Activated T-helper 1 cell treated with anti-CD3 and anti-CD28 coated beads, Interleukin-12 subunit alpha, Interleukin-12 subunit beta, Interleukin-2, Interleukin-4 antibody, amounts not matched to agents 30 ng/mL and 10 ng/mL and 1 ng/mL, durations not matched to agents 14 hours and 24 hours and 36 hours (primary cell): ENCODE measurements at regions of chr17 and their contacts with region 1.

Region 1: GRCh38 chr17:73645050-73645978 is 1.1 kb upstream of the SDK2 start:
- DNase-seq: no peak
- H3K4me3 Mint-ChIP-seq: peak overlapping the region; percentile 57
- H3K27ac Mint-ChIP-seq: no peak overlapping the region
- H3K4me1 Mint-ChIP-seq: peaks cover 9% of the 10 kb centered on the region
- H3K27me3 Mint-ChIP-seq: peaks cover 55% of the 10 kb centered on the region

Region 2: GRCh38 chr17:73429440-73430164 is 215.7 kb before region 1 on chr17:
- intact Hi-C with region 1: loop called (anchors 2 kb)
- DNase-seq: peak; percentile 69
- H3K4me3 Mint-ChIP-seq: no peak overlapping the region
- H3K27ac Mint-ChIP-seq: no peak overlapping the region
- H3K4me1 Mint-ChIP-seq: peaks cover 16% of the 10 kb centered on the region
- H3K27me3 Mint-ChIP-seq: peaks cover 3% of the 10 kb centered on the region

Region 3: DNA sequence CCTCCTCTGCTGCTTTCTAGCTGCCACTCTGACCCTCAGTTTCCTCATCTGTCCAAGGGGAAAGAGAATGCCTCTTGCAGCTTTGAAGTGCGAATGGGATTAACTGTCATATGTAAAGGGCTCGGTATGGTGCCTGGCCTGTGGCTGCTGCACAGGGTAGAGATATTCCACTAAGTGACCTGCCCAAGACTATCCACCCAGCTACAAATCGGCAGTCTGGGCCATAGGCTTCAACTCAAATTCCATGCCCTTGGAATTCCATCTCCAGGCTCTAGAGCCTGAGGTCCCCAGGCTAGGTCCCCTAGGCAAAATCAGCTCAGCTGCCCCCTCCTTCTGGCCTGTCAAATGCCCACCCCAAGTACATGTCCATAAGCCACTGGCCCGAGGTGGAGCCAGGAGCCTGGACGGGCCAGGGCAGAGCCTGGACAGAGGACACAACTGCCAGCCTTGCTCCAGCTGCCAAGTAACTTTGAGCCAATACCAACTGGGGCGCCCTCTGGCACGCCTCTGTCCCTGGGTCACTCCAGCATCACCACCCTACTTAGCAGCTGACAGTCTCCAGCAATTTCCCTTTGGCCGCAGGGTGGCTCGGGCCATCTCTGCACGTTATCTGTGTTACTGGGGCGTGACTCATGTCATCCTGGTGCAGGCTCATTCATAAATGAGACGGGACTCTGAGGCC is 58.3 kb before region 1 on chr17:
- intact Hi-C with region 1: loop called (anchors 2 kb)
- DNase-seq: no peak
- H3K4me3 Mint-ChIP-seq: no peak overlapping the region
- H3K27ac Mint-ChIP-seq: no peak overlapping the region
- H3K4me1 Mint-ChIP-seq: peaks cover 45% of the 10 kb centered on the region
- H3K27me3 Mint-ChIP-seq: peaks cover 3% of the 10 kb centered on the region

Region 4: GRCh38 chr17:73710095-73710592 is 64.8 kb after region 1 on chr17:
- intact Hi-C with region 1: loop called (anchors 2 kb)
- DNase-seq: peak; percentile 48
- H3K4me3 Mint-ChIP-seq: no peak overlapping the region
- H3K27ac Mint-ChIP-seq: no peak overlapping the region
- H3K4me1 Mint-ChIP-seq: peaks cover 7% of the 10 kb centered on the region
- H3K27me3 Mint-ChIP-seq: peaks cover 6% of the 10 kb centered on the region